Breast epithelium (tissue), 4 donors: ENCODE measurements at regions of chr20 and their contacts with region 1.

Region 1: DNA sequence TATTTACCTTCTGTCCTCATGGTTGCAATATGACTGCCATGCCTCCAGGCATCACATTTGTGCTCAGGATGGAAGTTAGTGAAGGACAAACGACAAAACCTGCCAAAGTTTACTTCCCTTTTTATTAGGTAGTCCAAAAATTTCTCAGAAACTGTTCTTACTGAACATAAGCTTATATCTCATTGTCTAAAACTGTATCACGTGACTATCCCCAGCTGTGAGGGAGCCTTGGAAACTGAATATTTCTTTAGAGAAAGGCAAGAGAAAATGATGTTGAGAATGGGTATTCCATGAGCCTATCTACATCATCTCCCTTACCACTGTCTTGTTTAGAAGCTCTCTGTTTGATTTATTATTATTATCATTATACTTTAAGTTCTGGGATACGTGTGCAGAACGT is 303.6 kb upstream of the PRND start:
- DNase-seq: no peak
- H3K4me3 ChIP-seq: no peak overlapping the region
- H3K27ac ChIP-seq: no peak overlapping the region
- H3K4me1 ChIP-seq: no peaks in the 10 kb centered on the region
- H3K27me3 ChIP-seq: no peaks in the 10 kb centered on the region
- CTCF ChIP-seq: no peak
- POLR2A ChIP-seq: no peak

Region 2: DNA sequence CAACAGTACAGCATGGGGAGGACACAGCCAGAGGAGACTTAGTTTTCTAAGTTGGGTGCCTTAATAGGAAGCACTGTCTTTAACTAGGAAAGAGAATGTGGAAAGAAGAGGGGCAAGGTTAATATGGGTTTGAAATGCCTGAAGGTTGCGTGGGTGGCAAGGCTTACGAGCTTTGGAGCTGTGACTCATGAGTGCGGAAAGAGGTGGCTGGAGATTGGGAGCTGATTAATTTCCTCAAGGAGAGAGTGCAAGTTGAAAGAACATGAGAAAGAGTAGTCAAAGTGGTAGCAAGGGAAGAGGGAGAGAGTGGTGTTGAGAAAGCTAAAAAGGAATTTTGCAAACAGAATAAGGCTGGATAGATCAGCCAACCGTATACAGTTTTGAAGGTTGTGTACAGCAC is 11.5 kb before region 1 on chr20:
- intact Hi-C with region 1: loop called (anchors 1 kb)
- DNase-seq: no peak
- H3K4me3 ChIP-seq: no peak overlapping the region
- H3K27ac ChIP-seq: no peak overlapping the region
- H3K4me1 ChIP-seq: no peaks in the 10 kb centered on the region
- H3K27me3 ChIP-seq: no peaks in the 10 kb centered on the region
- CTCF ChIP-seq: no peak
- POLR2A ChIP-seq: no peak